Activated T-helper 1 cell treated with anti-CD3 and anti-CD28 coated beads, Interleukin-12 subunit alpha, Interleukin-12 subunit beta, Interleukin-2, Interleukin-4 antibody, amounts not matched to agents 30 ng/mL and 10 ng/mL and 1 ng/mL, durations not matched to agents 14 hours and 24 hours and 36 hours (primary cell): ENCODE measurements at regions of chr12 and their contacts with region 1.

Region 1: DNA sequence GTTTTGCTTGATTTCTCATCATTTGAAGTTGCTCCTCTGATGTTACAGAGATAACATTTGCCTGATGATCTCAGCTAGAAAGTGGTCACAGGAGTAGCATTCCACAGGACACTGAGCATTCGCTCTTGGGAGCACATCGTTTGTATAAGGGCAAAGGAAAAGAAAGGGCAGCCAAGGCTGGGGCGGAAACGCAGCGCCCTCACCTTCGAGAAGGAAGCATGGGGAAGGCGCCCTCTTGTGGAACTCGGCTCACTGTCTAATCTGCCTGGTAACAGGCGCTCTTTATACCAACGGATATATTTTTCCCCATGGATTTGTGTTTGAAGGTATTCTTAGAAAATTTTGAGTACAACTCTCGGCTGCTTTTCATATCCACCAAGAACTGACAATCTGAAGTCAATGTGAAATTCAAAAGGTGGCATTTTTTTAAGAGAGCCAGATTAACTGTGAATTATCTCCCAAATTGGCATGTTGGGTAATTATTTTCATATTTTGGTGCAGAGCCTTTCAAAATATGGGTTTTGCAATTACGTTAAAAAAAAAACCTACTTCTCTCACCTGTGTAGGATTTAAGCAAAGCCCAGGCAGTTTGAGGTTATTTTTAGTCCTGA is 172.7 kb downstream of the CAND1 start:
- DNase-seq: peak; percentile 61
- H3K4me3 Mint-ChIP-seq: no peak overlapping the region
- H3K27ac Mint-ChIP-seq: no peak overlapping the region
- H3K4me1 Mint-ChIP-seq: peaks cover 15% of the 10 kb centered on the region
- H3K27me3 Mint-ChIP-seq: peaks cover 7% of the 10 kb centered on the region

Region 2: DNA sequence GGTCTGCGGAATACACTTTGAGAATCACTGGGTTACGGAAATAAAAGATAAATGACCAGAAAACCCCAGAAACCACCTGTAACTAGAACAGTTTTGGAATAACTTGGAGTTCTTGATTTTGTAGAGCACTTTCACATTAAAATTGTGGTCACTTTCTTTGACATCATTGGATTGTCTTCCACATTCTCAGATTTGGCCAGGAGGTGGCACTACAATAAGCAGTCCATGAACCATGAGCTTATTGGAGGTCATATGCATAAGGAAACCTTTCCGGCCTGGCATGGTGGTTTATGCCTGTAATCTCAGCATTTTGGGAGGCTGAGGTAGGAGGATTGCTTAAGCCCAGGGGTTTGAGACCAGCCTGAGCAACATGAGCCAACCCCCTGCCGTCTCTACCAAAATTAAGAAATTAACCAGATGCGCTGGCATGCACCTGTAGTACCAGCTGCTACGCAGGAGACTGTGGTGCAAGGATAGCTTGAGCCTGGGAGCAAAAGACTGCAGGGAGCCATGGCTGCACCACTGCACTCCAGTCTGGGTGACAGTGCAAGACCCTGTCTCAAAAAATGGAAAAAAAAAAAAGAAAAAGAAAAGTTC is 280.4 kb before region 1 on chr12:
- intact Hi-C with region 1: loop called (anchors 2 kb)
- DNase-seq: peak; percentile 2
- H3K4me3 Mint-ChIP-seq: no peak overlapping the region
- H3K27ac Mint-ChIP-seq: no peak overlapping the region
- H3K4me1 Mint-ChIP-seq: no peaks in the 10 kb centered on the region
- H3K27me3 Mint-ChIP-seq: peaks cover 5% of the 10 kb centered on the region

Region 3: DNA sequence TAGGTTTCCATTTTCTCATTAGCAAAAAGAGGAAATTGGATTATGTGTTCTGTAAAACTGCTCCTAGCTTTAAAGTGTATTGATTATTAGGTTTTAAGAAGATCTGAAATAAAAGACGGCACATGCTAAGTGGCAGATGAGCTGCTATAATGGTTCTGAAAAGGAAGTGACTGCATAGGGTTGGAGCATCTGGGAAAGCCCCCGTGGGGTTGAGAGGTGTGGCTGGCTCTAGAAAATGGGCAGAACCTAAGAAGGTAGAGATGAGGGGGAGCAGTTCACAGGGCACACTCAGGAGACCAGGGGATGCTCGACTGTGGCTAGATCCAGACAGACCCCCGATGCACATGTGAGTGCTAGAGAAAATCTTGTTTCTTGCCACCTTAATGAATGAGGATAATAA is 549.3 kb after region 1 on chr12:
- intact Hi-C with region 1: loop called (anchors 2 kb)
- DNase-seq: peak; percentile 48
- H3K4me3 Mint-ChIP-seq: peak overlapping the region; percentile 78
- H3K27ac Mint-ChIP-seq: peak overlapping the region; percentile 91
- H3K4me1 Mint-ChIP-seq: peaks cover 77% of the 10 kb centered on the region
- H3K27me3 Mint-ChIP-seq: no peaks in the 10 kb centered on the region